ENCODE measurements at regions of chr7 and their contacts with region 1.

Region 1: GRCh38 chr7:23679898-23680413 is at the start of gene FAM221A:
- DNase-seq: peak; percentile 81
- ATAC-seq: peak; percentile 93
- H3K4me3 ChIP-seq: peak within 1 kb of the TSS; percentile 76
- H3K27ac ChIP-seq: no peak within 1 kb of the TSS
- H3K4me1 ChIP-seq: peaks cover 3% of the 10 kb centered on the region; the same call in 1 of the 2 replicates
- H3K27me3 ChIP-seq: no peaks in the 10 kb centered on the region
- CTCF ChIP-seq: peak; percentile 63
- total RNA-seq, gene FAM221A: 0.75 and 5.6 TPM in 2 replicates

Region 2: DNA sequence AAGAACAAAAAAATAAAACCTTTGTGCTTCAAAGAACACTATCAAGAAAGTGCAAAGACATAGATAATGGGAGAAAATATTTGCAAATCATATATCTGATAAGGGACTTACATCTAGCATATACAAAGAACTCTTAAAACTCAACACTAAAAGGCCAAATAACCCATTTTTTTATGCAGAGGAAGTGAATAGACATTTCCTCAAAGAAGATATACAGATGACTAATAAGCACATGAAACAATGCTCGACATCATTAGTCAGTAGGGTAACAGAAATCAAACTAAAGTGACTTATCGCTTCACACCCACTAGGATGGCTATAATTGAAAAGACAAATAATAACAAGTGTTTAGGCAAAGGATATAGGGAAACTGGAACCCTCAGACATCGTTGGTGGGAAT is 302.8 kb before region 1 on chr7:
- CTCF ChIA-PET with region 1: no interaction called
- POLR2A ChIA-PET with region 1: no interaction called
- intact Hi-C with region 1: no loop called
- DNase-seq: peak; percentile 43
- ATAC-seq: peak; percentile 76
- H3K4me3 ChIP-seq: no peak overlapping the region
- H3K27ac ChIP-seq: no peak overlapping the region
- H3K4me1 ChIP-seq: peaks cover 26% of the 10 kb centered on the region
- H3K27me3 ChIP-seq: no peaks in the 10 kb centered on the region
- CTCF ChIP-seq: no peak

Region 3: GRCh38 chr7:23597094-23598091 is 82.6 kb before region 1 on chr7 and contains the start of gene CCDC126:
- CTCF ChIA-PET with region 1: no interaction called
- POLR2A ChIA-PET with region 1: no interaction called
- intact Hi-C with region 1: loop called (anchors 1 kb)
- DNase-seq: peak; percentile 91
- ATAC-seq: peak; percentile 93
- H3K4me3 ChIP-seq: peak within 1 kb of the TSS; percentile 75
- H3K27ac ChIP-seq: peak within 1 kb of the TSS; percentile 37; the same call in 1 of the 2 replicates
- H3K4me1 ChIP-seq: peaks cover 24% of the 10 kb centered on the region
- H3K27me3 ChIP-seq: no peaks in the 10 kb centered on the region
- CTCF ChIP-seq: no peak
- total RNA-seq, gene CCDC126: 3.2 and 5.6 TPM in 2 replicates

Region 4: DNA sequence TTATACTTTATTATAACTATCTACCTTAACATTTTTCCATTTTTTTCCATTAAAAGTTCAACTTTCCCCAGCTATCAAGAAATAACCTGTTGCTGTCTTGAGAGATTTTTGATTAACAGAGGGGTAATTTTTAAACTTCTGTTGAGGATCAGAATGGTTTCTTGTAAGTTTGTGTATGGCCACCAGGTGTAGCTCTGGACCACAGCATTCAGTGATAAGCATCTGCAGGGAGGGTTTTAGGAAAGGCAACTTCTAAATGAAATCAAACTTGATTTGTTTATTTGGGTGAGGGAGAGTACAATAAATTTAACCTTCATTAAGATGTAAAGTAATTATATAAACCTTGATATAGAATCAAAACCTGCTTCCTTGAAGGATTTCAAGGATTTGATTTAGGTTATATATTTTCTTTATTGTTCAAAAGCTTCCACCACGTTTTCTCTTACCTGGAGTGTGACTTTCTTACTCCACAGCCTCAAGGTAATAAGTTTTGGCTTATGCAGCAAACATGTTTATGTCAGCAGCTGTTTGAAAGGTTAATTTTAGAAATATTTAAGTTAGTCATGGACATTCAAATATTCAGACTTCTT is 183.3 kb after region 1 on chr7:
- CTCF ChIA-PET with region 1: no interaction called
- POLR2A ChIA-PET with region 1: no interaction called
- intact Hi-C with region 1: no loop called
- DNase-seq: peak; percentile 63
- ATAC-seq: peak; percentile 74
- H3K4me3 ChIP-seq: no peak overlapping the region
- H3K27ac ChIP-seq: no peak overlapping the region
- H3K4me1 ChIP-seq: peaks cover 9% of the 10 kb centered on the region; the same call in 1 of the 2 replicates
- H3K27me3 ChIP-seq: no peaks in the 10 kb centered on the region
- CTCF ChIP-seq: peak; percentile 80

Measured in PC-3 (cell line).